ENCODE measurements at regions of chr17 and their contacts with region 1.

Region 1: GRCh38 chr17:75199886-75200618 is 5.4 kb upstream of the NUP85 start:
- DNase-seq: no peak
- ATAC-seq: no peak
- H3K4me3 Mint-ChIP-seq: no peak overlapping the region
- H3K27ac Mint-ChIP-seq: no peak overlapping the region
- H3K4me1 Mint-ChIP-seq: 0 out of 2 replicates have a peak, but pooled peaks cover 2% of the 10 kb centered on the region
- H3K27me3 Mint-ChIP-seq: peaks cover 2% of the 10 kb centered on the region; the same call in 1 of the 2 replicates
- CTCF ChIP-seq: no peak

Region 2: GRCh38 chr17:75182569-75183450 is 17.2 kb before region 1 on chr17 and contains the start of gene SUMO2:
- CTCF ChIA-PET with region 1: interaction called, 11 read pairs
- POLR2A ChIA-PET with region 1: interaction called, 4 read pairs
- DNase-seq: peak; percentile 95
- ATAC-seq: peak; percentile 79
- H3K4me3 Mint-ChIP-seq: peak within 1 kb of the TSS; percentile 92
- H3K27ac Mint-ChIP-seq: peak within 1 kb of the TSS; percentile 96
- H3K4me1 Mint-ChIP-seq: peaks cover 26% of the 10 kb centered on the region
- H3K27me3 Mint-ChIP-seq: no peaks in the 10 kb centered on the region
- CTCF ChIP-seq: no peak
- total RNA-seq, gene SUMO2: 650 to 764 TPM (median 757 TPM) in 3 replicates